ENCODE measurements at regions of chr12 and their contacts with region 1.

Region 1: DNA sequence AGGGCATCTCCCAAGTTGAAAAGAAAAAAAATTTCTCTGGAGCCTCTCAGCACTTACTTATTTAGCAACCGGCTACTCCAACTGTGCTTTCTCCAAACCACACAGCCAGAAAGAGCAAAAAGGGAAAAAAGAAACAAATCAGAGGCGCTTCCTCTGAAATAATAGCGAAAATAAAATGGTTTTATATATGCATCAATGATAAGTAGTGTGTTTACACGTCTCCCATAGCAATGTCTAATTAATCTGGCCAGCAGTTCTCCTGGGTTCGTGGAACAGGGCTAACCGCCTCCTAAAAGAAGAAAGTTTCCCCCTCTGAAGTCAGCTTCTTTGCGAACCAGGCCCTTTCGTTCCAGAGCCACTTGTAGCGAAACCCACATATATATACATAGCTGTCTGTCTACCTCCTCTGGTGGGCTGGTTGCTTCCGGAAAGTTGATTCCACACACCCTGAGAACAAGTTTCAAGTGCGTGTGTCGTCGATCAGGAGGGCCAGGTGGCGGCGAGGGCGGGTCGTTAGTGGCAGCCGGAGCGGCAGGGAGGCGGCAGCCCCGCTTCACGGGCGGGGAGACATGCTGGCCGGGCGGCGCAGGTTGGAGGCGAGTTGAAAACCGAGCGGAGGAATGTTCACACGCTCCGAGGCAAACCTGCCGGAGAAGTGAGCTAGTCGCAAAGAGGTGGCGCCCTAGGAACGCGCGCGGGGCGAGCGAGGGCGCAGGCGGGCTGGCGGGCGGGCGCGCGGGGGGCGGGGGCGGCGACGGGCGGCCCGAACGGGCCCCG is 2.7 kb downstream of the PTHLH start:
- DNase-seq: peak; percentile 100
- ATAC-seq: peak; percentile 57
- H3K4me3 ChIP-seq: peak overlapping the region; percentile 68
- H3K27ac ChIP-seq: peak overlapping the region; percentile 76
- H3K4me1 ChIP-seq: peaks cover 78% of the 10 kb centered on the region
- H3K27me3 ChIP-seq: no peaks in the 10 kb centered on the region
- CTCF ChIP-seq: no peak

Region 2: DNA sequence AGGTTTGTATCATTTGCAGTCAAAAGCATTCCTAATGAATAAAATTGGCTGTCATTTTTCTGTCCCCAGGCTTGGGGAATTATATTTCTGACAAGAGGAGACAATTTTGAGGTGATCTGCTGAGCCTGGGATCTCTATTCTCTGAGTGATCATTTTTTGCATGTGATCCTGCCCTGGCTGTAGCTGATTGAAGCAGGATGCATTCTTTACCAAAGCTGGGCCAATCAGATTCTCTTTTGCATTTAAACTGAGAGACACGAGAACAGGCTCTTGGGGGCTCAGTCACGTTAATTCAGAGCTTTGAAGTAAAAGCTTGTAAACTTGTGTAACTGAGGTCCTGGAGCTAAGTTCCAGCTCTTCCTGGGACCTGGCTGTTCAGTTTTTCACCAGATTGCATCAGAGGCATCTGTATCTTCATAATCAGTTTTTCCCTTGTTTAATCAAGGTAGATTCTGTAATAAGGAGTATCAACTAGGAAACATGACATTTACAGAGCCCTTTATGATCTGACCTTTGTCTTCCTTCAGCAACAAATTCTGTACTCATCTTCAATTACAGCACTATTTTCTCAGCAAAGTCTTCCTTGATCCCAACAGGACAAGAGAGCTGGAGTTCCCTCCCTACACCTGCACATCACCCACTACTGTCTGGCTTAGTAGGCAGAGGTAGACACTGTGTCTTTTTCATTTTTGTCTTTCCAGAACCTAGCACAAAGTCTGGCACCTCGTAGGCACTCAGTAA is 154.8 kb before region 1 on chr12:
- CTCF ChIA-PET with region 1: no interaction called
- POLR2A ChIA-PET with region 1: no interaction called
- intact Hi-C with region 1: no loop called
- DNase-seq: no peak
- ATAC-seq: peak; percentile 22; the same call in 1 of the 2 replicates
- H3K4me3 ChIP-seq: no peak overlapping the region
- H3K27ac ChIP-seq: no peak overlapping the region
- H3K4me1 ChIP-seq: peaks cover 16% of the 10 kb centered on the region
- H3K27me3 ChIP-seq: no peaks in the 10 kb centered on the region
- CTCF ChIP-seq: no peak

Region 3: GRCh38 chr12:27901959-27902358 is 67.9 kb before region 1 on chr12:
- CTCF ChIA-PET with region 1: no interaction called
- POLR2A ChIA-PET with region 1: no interaction called
- intact Hi-C with region 1: no loop called
- DNase-seq: no peak
- ATAC-seq: no peak
- H3K4me3 ChIP-seq: no peak overlapping the region
- H3K27ac ChIP-seq: no peak overlapping the region
- H3K4me1 ChIP-seq: peaks cover 24% of the 10 kb centered on the region
- H3K27me3 ChIP-seq: no peaks in the 10 kb centered on the region
- CTCF ChIP-seq: no peak

Region 4: GRCh38 chr12:28035500-28035899 is 65.7 kb after region 1 on chr12:
- CTCF ChIA-PET with region 1: interaction called, 4 read pairs
- POLR2A ChIA-PET with region 1: interaction called, 8 read pairs
- intact Hi-C with region 1: loop called (anchors 1 kb)
- DNase-seq: peak; percentile 100
- ATAC-seq: peak; percentile 52
- H3K4me3 ChIP-seq: no peak overlapping the region
- H3K27ac ChIP-seq: peak overlapping the region; percentile 77
- H3K4me1 ChIP-seq: peaks cover 40% of the 10 kb centered on the region
- H3K27me3 ChIP-seq: no peaks in the 10 kb centered on the region
- CTCF ChIP-seq: no peak

Region 5: DNA sequence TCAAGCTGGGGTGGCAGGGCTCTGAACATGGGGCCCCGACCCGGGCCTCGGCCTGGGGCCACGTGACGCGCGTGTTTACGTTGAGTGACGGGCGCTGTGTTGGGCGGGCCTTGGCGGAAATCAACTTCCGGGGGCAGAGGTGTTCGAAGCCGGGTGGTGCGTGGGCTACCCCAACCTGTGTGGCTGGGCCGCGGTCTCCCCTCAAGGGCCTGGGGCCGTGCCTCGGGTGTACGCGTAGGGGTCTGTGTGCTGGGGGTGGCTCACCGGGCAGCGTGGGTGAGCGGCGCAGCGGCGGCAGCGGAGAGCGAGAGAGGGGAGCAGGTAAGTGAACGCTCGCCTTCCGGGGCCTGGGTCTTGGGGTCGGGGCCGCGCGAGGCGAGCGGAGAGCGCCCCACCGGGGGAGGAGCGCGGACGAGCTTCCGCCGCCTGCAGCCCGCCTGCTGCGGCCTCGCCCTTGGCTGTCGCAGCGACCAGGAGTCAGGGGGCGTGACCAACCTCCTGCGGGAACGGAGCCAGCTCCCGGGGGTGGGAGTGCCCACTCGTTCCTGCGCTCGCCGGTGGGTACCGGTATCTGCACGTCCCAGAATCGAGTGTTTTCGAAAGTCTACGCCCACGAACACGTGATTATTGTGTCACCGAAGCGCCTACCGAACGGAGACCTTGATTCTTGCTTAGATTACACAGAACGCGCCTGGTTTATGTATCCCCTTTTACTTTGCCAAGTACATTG is 220.7 kb after region 1 on chr12 and contains the start of gene CCDC91:
- CTCF ChIA-PET with region 1: no interaction called
- POLR2A ChIA-PET with region 1: interaction called, 6 read pairs
- intact Hi-C with region 1: loop called (anchors 5 kb)
- DNase-seq: peak; percentile 84
- ATAC-seq: peak; percentile 78
- H3K4me3 ChIP-seq: peak within 1 kb of the TSS; percentile 76
- H3K27ac ChIP-seq: peak within 1 kb of the TSS; percentile 88
- H3K4me1 ChIP-seq: peaks cover 19% of the 10 kb centered on the region
- H3K27me3 ChIP-seq: no peaks in the 10 kb centered on the region
- CTCF ChIP-seq: no peak
- total RNA-seq, gene CCDC91: 15.7 and 22.2 TPM in 2 replicates

Region 6: GRCh38 chr12:28759312-28759751 is 789.5 kb after region 1 on chr12:
- CTCF ChIA-PET with region 1: no interaction called
- POLR2A ChIA-PET with region 1: no interaction called
- intact Hi-C with region 1: loop called (anchors 2 kb)
- DNase-seq: peak; percentile 100
- ATAC-seq: peak; percentile 99
- H3K4me3 ChIP-seq: no peak overlapping the region
- H3K27ac ChIP-seq: peak overlapping the region; percentile 73
- H3K4me1 ChIP-seq: peaks cover 15% of the 10 kb centered on the region
- H3K27me3 ChIP-seq: no peaks in the 10 kb centered on the region
- CTCF ChIP-seq: peak; percentile 65

Region 7: DNA sequence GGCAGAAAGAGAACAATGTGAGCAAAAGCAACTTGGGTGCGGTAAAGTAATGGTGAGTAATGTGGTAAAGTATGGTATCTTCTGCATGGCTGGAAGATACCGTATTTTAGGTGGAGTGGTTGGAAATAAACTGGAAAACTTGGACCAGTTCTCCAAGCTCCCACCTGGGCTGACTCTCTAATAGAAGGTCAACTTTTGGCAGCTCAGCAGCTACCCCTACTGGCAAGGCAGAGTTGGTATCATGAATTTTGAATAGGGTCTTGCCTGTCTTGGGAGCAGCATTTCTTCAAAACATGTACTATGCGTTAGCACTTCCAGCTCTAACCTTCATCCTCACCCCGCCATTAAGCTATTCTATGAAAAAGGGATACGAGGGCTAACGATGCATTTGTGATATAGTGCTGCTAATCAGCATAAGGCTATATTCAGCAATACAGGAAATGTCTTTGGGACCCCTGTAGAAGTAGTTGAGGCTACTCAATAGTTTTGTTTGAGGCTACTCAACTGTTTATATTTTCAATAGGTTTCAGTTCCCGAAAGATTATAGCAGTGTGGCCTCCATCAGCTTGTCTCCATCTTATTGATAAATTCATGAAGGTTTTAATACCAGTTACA is 902.9 kb after region 1 on chr12:
- CTCF ChIA-PET with region 1: interaction called, 25 read pairs
- POLR2A ChIA-PET with region 1: interaction called, 8 read pairs
- intact Hi-C with region 1: loop called (anchors 1 kb)
- DNase-seq: peak; percentile 100
- ATAC-seq: peak; percentile 37
- H3K4me3 ChIP-seq: no peak overlapping the region
- H3K27ac ChIP-seq: peak overlapping the region; percentile 78
- H3K4me1 ChIP-seq: peaks cover 48% of the 10 kb centered on the region
- H3K27me3 ChIP-seq: no peaks in the 10 kb centered on the region
- CTCF ChIP-seq: no peak

Region 8: GRCh38 chr12:28998637-28999120 is 1028.9 kb after region 1 on chr12:
- CTCF ChIA-PET with region 1: interaction called, 4 read pairs
- POLR2A ChIA-PET with region 1: interaction called, 3 read pairs
- intact Hi-C with region 1: loop called (anchors 1 kb)
- DNase-seq: peak; percentile 92
- ATAC-seq: peak; percentile 86
- H3K4me3 ChIP-seq: no peak overlapping the region
- H3K27ac ChIP-seq: no peak overlapping the region
- H3K4me1 ChIP-seq: no peaks in the 10 kb centered on the region
- H3K27me3 ChIP-seq: no peaks in the 10 kb centered on the region
- CTCF ChIP-seq: peak; percentile 100